Vagina (tissue), 2 donors: ENCODE measurements at regions of chr15 and their contacts with region 1.

Region 1: DNA sequence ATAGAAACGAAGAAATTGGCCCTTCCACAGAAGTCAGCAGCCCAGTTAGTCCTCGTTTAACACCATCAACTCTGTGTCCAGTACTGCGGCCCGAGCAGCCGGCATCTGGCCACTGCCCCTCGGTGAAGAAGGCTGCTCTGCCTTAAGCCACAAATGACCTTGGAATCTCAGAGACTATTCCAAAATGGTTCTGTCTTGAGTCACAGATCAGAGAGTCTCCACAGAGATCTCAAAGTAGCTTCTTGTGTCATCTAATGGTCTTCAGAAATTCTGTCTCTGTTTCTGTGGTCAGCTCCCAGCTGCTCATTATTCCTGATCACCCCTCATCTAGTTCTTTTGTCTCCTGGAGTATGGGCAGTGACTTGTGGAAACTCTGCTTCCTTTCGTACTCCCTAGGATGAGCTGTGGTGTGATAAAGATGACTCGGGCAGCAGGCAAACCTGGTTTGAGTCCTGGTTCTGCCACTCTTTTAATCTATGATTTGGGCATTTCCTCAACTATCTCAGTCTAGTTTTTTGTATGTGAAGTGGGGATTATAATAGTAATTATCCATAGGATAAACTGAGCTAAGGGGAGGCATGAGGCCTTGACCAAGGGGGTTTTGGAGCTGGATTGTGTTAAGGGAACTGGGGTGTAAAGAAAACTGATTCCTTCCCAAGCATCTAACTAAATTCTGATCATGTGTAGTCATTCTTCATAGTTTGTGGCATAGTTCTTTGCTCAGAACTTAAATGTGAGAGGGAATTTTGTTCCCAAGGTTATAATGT is 22.6 kb downstream of the CRTC3 start:
- DNase-seq: no peak
- H3K4me3 ChIP-seq: no peak overlapping the region
- H3K27ac ChIP-seq: peak overlapping the region; percentile 76
- H3K4me1 ChIP-seq: peaks cover 46% of the 10 kb centered on the region
- H3K27me3 ChIP-seq: no peaks in the 10 kb centered on the region
- CTCF ChIP-seq: no peak
- POLR2A ChIP-seq: no peak

Region 2: GRCh38 chr15:90402230-90402629 is 150.1 kb before region 1 on chr15:
- intact Hi-C with region 1: no loop called
- DNase-seq: no peak
- H3K4me3 ChIP-seq: no peak overlapping the region
- H3K27ac ChIP-seq: peak overlapping the region; percentile 79
- H3K4me1 ChIP-seq: peaks cover 90% of the 10 kb centered on the region
- H3K27me3 ChIP-seq: no peaks in the 10 kb centered on the region
- CTCF ChIP-seq: no peak
- POLR2A ChIP-seq: no peak

Region 3: GRCh38 chr15:90572893-90573292 is 20.5 kb after region 1 on chr15:
- intact Hi-C with region 1: loop called (anchors 1 kb)
- DNase-seq: no peak
- H3K4me3 ChIP-seq: no peak overlapping the region
- H3K27ac ChIP-seq: no peak overlapping the region
- H3K4me1 ChIP-seq: peaks cover 23% of the 10 kb centered on the region
- H3K27me3 ChIP-seq: no peaks in the 10 kb centered on the region
- CTCF ChIP-seq: no peak
- POLR2A ChIP-seq: no peak

Region 4: GRCh38 chr15:91400481-91400880 is 848.1 kb after region 1 on chr15:
- intact Hi-C with region 1: no loop called
- DNase-seq: no peak
- H3K4me3 ChIP-seq: no peak overlapping the region
- H3K27ac ChIP-seq: no peak overlapping the region
- H3K4me1 ChIP-seq: no peaks in the 10 kb centered on the region
- H3K27me3 ChIP-seq: no peaks in the 10 kb centered on the region
- CTCF ChIP-seq: no peak
- POLR2A ChIP-seq: no peak

Region 5: GRCh38 chr15:91981821-91982801 is 1429.8 kb after region 1 on chr15:
- intact Hi-C with region 1: no loop called
- DNase-seq: no peak
- H3K4me3 ChIP-seq: no peak overlapping the region
- H3K27ac ChIP-seq: no peak overlapping the region
- H3K4me1 ChIP-seq: peaks cover 23% of the 10 kb centered on the region
- H3K27me3 ChIP-seq: no peaks in the 10 kb centered on the region
- CTCF ChIP-seq: no peak
- POLR2A ChIP-seq: no peak